Transverse colon (tissue), 4 donors: ENCODE measurements at regions of chr1 and their contacts with region 1.

Region 1: GRCh38 chr1:91529856-91530255 is 29.2 kb downstream of the CDC7 start:
- DNase-seq: no peak
- H3K4me3 ChIP-seq: no peak overlapping the region
- H3K27ac ChIP-seq: no peak overlapping the region
- H3K4me1 ChIP-seq: no peaks in the 10 kb centered on the region
- H3K27me3 ChIP-seq: no peaks in the 10 kb centered on the region
- CTCF ChIP-seq: peak in 2 of 5 experiments; percentile 14 to 20
- EP300 ChIP-seq: no peak
- POLR2A ChIP-seq: no peak

Region 2: DNA sequence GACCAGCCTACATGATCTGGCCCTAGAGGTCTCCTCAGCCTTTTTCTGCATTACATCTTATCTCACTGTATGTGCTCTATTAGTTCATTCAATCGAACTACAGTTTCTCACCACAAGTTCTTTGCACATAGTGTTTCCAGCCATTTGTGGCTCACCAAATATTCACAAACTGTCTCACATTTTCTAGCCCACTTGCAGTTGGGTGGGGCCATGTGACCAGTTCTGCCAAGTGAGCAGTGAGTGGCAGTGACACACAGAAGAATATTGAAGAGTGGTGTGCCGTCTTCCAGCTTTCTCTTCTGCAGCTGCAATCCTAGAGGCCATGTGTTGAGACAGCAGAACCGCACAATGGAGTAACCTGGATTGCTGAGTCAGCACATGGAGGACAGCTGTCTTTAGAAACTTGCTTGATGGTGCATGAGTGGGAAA is 404.9 kb before region 1 on chr1:
- in situ Hi-C with region 1: no loop called
- intact Hi-C with region 1: no loop called
- DNase-seq: no peak
- H3K4me3 ChIP-seq: no peak overlapping the region
- H3K27ac ChIP-seq: no peak overlapping the region
- H3K4me1 ChIP-seq: peaks cover 0 to 19% (median 7%) of the 10 kb centered on the region in 4 donors
- H3K27me3 ChIP-seq: no peaks in the 10 kb centered on the region
- CTCF ChIP-seq: no peak
- EP300 ChIP-seq: no peak
- POLR2A ChIP-seq: no peak

Region 3: DNA sequence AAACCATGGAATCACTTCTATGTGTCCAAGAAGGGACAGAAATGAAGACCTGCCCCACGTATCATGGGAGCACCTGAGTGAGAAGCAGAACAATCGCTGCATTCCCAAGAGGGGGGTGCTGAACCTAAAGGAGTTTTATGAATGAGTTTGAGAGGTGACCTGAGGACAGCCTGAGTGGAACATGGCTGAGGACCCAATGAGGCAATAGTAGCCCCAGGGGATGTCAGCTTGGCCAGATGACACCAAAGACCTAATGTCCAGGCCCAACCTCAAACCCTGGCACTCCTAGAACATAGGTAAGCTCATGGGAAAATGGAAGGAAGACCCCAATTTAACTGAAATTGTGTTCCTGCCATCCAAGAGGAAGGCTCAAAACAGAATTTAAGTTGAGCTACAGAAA is 56.3 kb before region 1 on chr1:
- in situ Hi-C with region 1: no loop called
- intact Hi-C with region 1: no loop called
- DNase-seq: no peak
- H3K4me3 ChIP-seq: no peak overlapping the region
- H3K27ac ChIP-seq: no peak overlapping the region
- H3K4me1 ChIP-seq: no peaks in the 10 kb centered on the region
- H3K27me3 ChIP-seq: no peaks in the 10 kb centered on the region
- CTCF ChIP-seq: no peak
- EP300 ChIP-seq: no peak
- POLR2A ChIP-seq: no peak

Region 4: DNA sequence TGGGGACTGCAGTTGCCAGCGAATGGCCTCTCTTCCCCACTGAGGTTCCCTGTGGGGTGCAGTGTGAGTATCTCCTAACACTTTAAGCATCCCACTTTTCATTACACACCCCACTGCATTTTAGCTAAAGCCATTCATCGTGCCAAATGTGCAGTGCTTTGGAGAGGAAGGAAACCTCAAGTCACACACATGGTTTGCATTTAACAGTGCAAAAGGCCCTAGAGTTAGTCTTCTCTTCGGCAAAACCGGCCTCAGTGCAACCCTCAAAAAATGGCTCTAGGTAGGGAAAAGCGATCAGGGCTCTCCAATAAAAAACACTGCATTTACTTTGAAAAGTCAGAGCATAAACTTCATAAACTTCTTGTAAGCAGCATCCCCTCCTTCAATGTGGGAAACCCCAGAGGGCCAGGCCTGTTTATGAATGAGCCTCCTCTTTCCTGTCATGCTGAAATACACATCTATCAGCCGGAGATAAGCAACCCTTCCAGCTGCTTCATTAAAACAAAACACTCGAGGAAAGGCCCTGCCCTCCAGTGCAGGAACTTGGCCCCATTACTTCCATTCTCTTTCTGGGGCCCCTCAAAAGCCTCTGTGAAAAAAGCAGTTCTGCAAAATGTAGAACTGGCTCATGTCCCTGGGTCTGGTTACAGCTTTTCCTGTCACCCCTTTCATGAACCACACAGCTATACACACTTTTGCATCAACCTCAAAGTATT is 154.8 kb after region 1 on chr1:
- in situ Hi-C with region 1: loop called in 1 of 4 experiments (anchors 10 kb)
- intact Hi-C with region 1: no loop called
- DNase-seq: no peak
- H3K4me3 ChIP-seq: no peak overlapping the region
- H3K27ac ChIP-seq: peak overlapping the region; percentile 0 to 41 (median 18)
- H3K4me1 ChIP-seq: peaks cover 6 to 55% (median 22%) of the 10 kb centered on the region in 4 donors
- H3K27me3 ChIP-seq: no peaks in the 10 kb centered on the region
- CTCF ChIP-seq: no peak
- EP300 ChIP-seq: no peak
- POLR2A ChIP-seq: no peak

Region 5: GRCh38 chr1:92070892-92071291 is 541.0 kb after region 1 on chr1:
- in situ Hi-C with region 1: no loop called
- intact Hi-C with region 1: no loop called
- DNase-seq: no peak
- H3K4me3 ChIP-seq: no peak overlapping the region
- H3K27ac ChIP-seq: no peak overlapping the region
- H3K4me1 ChIP-seq: no peaks in the 10 kb centered on the region
- H3K27me3 ChIP-seq: no peaks in the 10 kb centered on the region
- CTCF ChIP-seq: no peak
- EP300 ChIP-seq: no peak
- POLR2A ChIP-seq: no peak